Activated B cell treated with CpG ODN at 0.5 μM for 24 hours (primary cell): ENCODE measurements at regions of chr9 and their contacts with region 1.

Region 1: DNA sequence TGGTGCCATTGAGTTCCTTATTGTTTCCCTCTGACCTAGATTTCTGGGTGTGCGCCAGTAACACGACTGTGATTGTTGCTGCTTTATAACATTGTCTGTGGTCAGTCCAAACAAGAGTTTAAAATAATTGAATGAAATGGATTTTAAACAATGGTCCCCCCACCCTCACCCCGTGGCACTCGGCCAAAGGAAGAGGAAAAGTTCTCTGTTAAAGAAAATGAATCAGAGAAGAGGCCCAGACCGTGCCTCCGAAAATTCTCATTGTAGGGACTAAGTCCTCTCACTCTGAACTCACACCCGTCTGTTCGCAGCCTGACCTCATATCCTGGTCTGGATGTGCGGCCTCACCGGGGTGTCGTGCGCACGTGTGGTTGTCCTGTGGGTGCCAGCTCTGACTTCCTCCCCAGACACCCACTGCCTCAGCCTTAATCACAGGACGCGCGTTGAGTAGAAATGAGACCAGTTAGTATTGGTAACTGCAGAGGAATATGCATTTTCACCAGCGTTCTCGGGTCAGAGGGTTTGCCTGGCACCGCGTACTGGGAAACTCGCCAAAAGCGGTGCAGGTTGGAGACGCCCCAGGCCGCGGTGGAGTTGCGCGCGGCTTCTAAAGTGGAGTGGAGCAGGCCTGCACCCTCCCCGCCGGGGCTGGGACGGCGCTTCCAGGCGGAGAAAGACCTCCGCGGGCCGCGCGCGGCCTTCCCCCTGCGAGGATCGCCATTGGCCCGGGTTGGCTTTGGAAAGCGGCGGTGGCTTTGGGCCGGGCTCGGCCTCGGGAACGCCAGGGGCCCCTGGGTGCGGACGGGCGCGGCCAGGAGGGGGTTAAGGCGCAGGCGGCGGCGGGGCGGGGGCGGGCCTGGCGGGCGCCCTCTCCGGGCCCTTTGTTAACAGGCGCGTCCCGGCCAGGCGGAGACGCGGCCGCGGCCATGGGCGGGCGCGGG is at the start of gene ABL1:
- DNase-seq: peak; percentile 55
- ATAC-seq: peak; percentile 83
- H3K4me3 Mint-ChIP-seq: peak within 1 kb of the TSS; percentile 94
- H3K27ac Mint-ChIP-seq: peak within 1 kb of the TSS; percentile 89
- H3K4me1 Mint-ChIP-seq: peaks cover 40% of the 10 kb centered on the region
- H3K27me3 Mint-ChIP-seq: no peaks in the 10 kb centered on the region
- CTCF ChIP-seq: no peak
- total RNA-seq, gene ABL1: 32.8 and 41.6 TPM in 2 replicates

Region 2: GRCh38 chr9:130728721-130729120 is 105.9 kb before region 1 on chr9:
- CTCF ChIA-PET with region 1: no interaction called
- POLR2A ChIA-PET with region 1: no interaction called
- intact Hi-C with region 1: no loop called
- DNase-seq: no peak
- ATAC-seq: no peak
- H3K4me3 Mint-ChIP-seq: no peak overlapping the region
- H3K27ac Mint-ChIP-seq: no peak overlapping the region
- H3K4me1 Mint-ChIP-seq: peaks cover under 1% of the 10 kb centered on the region
- H3K27me3 Mint-ChIP-seq: no peaks in the 10 kb centered on the region
- CTCF ChIP-seq: no peak

Region 3: DNA sequence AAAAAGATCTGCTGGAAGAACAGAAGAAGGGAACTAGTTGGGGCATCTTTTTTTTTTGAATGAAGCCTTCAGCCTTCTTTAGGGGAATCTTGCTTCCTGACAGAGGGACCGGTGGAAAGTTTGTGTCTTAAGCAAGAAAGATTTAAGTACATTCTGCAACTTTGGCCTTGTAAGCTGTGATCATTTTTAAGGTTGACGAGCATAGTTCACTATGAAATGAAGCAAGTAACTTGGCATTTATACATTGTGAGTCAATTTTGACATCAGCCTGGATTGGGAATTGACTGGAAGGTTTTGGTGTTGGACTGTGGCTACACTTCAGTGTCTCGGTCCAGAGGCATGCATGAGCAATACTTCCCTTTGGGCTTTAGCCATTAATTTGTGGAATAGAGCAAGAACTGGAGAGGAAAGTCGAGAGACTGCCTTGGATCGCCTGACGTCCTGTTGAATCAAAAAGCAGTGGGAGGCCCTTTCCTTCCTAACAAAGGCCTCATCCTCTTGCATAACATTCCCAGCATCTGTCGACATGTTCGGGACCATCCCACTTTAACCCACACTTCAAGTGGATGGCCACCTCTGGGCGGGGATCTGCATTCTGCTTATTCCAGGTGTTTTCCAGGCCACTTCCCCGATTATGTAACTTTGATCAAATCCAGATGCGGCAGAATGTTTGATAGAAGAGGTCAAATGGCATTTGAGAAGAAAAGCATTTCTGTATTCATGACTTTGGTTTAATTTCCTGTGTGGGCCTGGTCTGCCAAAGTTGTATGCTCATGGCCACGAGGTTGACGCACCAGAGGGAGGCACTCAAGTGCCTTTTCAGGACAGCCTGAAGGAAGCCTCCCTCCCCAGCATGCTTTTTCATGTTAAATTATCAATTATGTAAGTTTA is 12.9 kb after region 1 on chr9:
- CTCF ChIA-PET with region 1: no interaction called
- POLR2A ChIA-PET with region 1: no interaction called
- intact Hi-C with region 1: loop called (anchors 2 kb)
- DNase-seq: no peak
- ATAC-seq: no peak
- H3K4me3 Mint-ChIP-seq: no peak overlapping the region
- H3K27ac Mint-ChIP-seq: no peak overlapping the region
- H3K4me1 Mint-ChIP-seq: peaks cover 6% of the 10 kb centered on the region
- H3K27me3 Mint-ChIP-seq: no peaks in the 10 kb centered on the region
- CTCF ChIP-seq: no peak

Region 4: DNA sequence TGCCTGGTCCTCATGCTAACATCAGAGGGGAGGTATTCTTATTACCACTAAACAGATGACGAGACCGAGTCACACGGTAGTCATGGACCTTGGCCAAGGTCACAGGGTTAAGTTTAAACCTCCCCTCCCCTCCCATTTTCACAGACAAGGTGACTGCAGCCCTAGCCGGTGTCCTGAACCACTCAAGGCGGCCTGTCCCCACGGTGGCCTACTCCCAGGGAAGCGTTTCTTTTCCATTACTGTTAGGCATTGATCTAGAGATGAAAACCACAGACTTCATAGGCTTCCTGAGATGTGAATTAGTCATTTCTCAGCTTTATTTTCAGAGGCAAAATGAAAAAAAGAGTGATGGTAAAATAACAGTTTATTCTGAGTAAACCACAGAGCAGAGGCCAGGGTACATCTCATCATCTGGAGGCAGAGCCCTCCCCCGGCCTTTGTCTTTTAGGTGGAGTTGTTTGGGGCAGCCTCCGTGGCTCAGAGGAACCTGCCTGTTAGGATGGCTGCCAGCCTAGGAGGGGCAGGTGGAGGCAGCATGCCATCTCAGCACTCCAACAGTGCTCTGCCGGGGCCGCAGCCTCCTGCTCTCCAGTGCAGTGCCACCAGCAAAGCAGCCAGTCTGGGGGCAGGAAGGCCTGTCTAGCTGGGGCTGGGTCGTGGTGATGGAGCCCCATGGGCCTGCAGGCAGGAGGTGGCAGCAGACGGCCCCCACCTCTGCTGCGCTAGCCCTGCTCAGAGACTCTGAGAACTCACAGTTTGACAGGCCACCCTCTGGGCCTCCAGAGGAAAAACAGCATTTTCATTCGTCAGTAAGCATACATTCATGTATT is 834.0 kb after region 1 on chr9:
- CTCF ChIA-PET with region 1: no interaction called
- POLR2A ChIA-PET with region 1: no interaction called
- intact Hi-C with region 1: no loop called
- DNase-seq: no peak
- ATAC-seq: peak; percentile 61
- H3K4me3 Mint-ChIP-seq: peak overlapping the region; percentile 78
- H3K27ac Mint-ChIP-seq: peak overlapping the region; percentile 93
- H3K4me1 Mint-ChIP-seq: peaks cover 99% of the 10 kb centered on the region
- H3K27me3 Mint-ChIP-seq: no peaks in the 10 kb centered on the region
- CTCF ChIP-seq: no peak